ENCODE measurements at regions of chr22 and their contacts with region 1.

Region 1: DNA sequence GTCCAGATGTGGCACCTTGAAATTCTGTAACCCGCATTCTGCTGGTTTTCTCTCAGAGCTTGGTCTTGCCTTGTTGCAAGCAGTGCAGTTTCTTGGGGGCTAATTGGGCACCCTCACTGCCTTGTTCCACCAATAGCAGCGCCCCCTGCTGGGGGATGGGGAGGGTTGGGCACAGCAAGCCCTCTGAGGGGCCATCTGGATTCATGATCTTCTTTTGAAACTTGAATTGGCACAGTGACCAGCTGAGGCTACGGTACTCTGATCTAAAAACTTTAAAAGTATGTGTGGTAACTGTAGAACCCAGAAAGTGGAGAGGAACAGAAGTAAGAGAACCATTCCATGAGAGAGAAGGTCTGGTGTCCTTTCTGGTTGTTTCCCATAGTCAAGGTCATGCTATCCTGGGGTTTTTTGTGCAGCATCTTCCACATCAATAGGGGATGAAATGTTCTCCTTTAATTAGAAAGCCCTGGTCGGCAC is 64.2 kb downstream of the MED15 start:
- DNase-seq: peak in 1 of 3 donors; percentile 57
- ATAC-seq: peak in 1 of 4 donors; percentile 40
- H3K4me3 ChIP-seq: no peak overlapping the region
- H3K27ac ChIP-seq: no peak overlapping the region
- H3K4me1 ChIP-seq: no peaks in the 10 kb centered on the region
- H3K27me3 ChIP-seq: no peaks in the 10 kb centered on the region
- CTCF ChIP-seq: peak; percentile 43 to 73 (median 62)
- POLR2A ChIP-seq: no peak

Region 2: DNA sequence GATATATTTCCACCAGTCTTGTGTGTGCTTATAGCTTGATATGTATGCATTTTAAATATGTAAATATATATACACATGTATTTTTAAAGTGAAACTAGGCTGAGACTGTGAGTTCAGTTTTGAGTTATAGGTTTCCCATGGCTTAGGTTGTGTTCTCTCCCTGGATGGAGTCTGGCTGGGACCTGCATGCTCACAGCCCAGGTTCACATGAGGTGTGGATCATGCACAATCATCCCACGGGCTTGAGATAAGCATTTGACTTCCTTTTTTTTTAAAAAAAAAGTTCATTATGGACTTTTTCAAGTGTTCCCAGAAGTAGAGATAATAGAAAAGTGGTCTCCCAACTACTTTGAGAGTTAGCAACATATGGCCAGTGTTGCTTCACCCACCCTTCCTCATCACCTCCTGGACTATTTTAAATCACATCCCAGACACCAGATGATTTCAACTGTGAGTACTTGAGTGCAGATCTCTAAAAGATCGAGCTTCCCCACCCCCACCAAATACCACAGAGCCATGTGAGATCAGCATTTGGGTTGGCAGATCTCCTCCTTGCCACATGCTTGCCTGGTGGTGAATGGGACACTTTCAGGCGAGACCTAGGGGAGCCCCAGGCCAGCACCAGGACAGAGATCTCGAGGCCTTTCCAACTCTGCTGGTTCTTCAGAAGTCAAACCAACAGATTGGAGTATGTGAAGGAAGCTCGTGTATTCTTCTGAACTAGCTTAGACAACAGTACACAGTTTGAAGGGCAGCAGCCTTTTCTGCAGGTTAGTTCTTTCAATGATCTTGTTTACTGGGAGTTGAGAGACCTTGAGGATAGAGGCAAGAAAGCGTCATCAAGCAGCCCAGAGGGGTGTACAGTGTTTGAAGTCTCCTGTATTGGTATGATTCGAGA is 48.2 kb before region 1 on chr22:
- intact Hi-C with region 1: loop called in 1 of 2 experiments (anchors 10 kb)
- DNase-seq: peak in 1 of 3 donors; percentile 11
- ATAC-seq: peak in 1 of 4 donors; percentile 37
- H3K4me3 ChIP-seq: no peak overlapping the region
- H3K27ac ChIP-seq: no peak overlapping the region
- H3K4me1 ChIP-seq: peaks cover 0 to 7% (median 0%) of the 10 kb centered on the region in 4 donors
- H3K27me3 ChIP-seq: no peaks in the 10 kb centered on the region
- CTCF ChIP-seq: no peak
- POLR2A ChIP-seq: no peak

Region 3: DNA sequence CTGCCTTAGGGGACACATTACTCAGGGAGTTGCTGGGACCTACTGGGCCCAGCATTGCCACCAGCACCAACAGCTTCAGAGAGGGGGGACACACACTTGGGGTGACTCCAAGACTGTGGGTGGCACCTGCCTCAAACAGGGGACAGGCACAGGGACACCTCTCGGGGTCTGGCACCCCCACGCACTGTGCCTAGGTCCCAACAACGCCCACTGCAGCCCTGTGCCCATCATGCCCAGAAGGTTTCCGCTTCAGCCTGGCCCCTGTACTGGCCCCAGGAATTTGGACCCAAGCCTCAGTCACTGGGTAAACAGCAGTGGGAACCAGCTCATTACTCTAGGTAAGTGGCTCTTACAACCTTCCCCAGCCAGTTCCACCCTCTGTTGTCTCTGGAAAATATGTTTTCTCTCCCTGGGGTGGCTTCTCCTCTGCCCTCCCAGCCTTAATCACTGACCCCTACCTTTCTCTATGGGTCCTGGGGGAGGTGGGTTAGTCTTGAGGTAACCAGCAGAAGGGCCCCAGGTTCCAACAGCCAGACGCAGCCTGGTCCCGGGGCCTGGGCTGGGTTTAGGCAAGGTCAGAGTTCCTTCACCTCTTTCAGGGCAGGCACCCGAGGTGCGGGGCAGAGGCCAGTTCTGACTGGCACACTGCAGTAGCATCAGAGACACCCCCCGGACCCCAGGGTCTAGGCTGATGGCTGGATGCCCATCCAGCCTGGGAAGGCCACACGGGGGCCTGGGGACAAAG is 59.5 kb after region 1 on chr22:
- intact Hi-C with region 1: no loop called
- DNase-seq: no peak
- ATAC-seq: peak; percentile 21 to 77 (median 35)
- H3K4me3 ChIP-seq: no peak overlapping the region
- H3K27ac ChIP-seq: no peak overlapping the region
- H3K4me1 ChIP-seq: peaks cover 0 to 6% (median 0%) of the 10 kb centered on the region in 4 donors
- H3K27me3 ChIP-seq: no peaks in the 10 kb centered on the region
- CTCF ChIP-seq: no peak
- POLR2A ChIP-seq: no peak